IMR-90 (cell line): ENCODE measurements at regions of chr5 and their contacts with region 1.

Region 1: GRCh38 chr5:41356786-41357185 is 143.5 kb upstream of the C6 start:
- DNase-seq: no peak
- ATAC-seq: no peak
- H3K4me3 ChIP-seq: no peak overlapping the region
- H3K27ac ChIP-seq: no peak overlapping the region
- H3K4me1 ChIP-seq: no peaks in the 10 kb centered on the region
- H3K27me3 ChIP-seq: no peaks in the 10 kb centered on the region
- CTCF ChIP-seq: no peak
- POLR2A ChIP-seq: no peak
- RAD21 ChIP-seq: no peak

Region 2: GRCh38 chr5:41509399-41510175 is 152.8 kb after region 1 on chr5:
- CTCF ChIA-PET with region 1: no interaction called
- POLR2A ChIA-PET with region 1: no interaction called
- dilution Hi-C with region 1: no loop called
- in situ Hi-C with region 1: no loop called
- intact Hi-C with region 1: loop called (anchors 5 kb)
- DNase-seq: no peak
- ATAC-seq: no peak
- H3K4me3 ChIP-seq: no peak overlapping the region
- H3K27ac ChIP-seq: no peak overlapping the region
- H3K4me1 ChIP-seq: no peaks in the 10 kb centered on the region
- H3K27me3 ChIP-seq: peaks cover 35% of the 10 kb centered on the region
- CTCF ChIP-seq: no peak
- POLR2A ChIP-seq: no peak
- RAD21 ChIP-seq: no peak